Common myeloid progenitor, CD34-positive (primary cell): ENCODE measurements at regions of chr11 and their contacts with region 1.

Region 1: GRCh38 chr11:12235947-12236743 is 125.8 kb downstream of the MICAL2 start:
- DNase-seq: peak; percentile 60 to 92 (median 91)
- H3K4me3 ChIP-seq: peak overlapping the region in 1 of 7 experiments; percentile 26
- H3K27ac ChIP-seq: peak overlapping the region; percentile 40 to 51
- H3K4me1 ChIP-seq: peaks cover 6 to 47% (median 43%) of the 10 kb centered on the region in 4 experiments
- H3K27me3 ChIP-seq: no peaks in the 10 kb centered on the region

Region 2: DNA sequence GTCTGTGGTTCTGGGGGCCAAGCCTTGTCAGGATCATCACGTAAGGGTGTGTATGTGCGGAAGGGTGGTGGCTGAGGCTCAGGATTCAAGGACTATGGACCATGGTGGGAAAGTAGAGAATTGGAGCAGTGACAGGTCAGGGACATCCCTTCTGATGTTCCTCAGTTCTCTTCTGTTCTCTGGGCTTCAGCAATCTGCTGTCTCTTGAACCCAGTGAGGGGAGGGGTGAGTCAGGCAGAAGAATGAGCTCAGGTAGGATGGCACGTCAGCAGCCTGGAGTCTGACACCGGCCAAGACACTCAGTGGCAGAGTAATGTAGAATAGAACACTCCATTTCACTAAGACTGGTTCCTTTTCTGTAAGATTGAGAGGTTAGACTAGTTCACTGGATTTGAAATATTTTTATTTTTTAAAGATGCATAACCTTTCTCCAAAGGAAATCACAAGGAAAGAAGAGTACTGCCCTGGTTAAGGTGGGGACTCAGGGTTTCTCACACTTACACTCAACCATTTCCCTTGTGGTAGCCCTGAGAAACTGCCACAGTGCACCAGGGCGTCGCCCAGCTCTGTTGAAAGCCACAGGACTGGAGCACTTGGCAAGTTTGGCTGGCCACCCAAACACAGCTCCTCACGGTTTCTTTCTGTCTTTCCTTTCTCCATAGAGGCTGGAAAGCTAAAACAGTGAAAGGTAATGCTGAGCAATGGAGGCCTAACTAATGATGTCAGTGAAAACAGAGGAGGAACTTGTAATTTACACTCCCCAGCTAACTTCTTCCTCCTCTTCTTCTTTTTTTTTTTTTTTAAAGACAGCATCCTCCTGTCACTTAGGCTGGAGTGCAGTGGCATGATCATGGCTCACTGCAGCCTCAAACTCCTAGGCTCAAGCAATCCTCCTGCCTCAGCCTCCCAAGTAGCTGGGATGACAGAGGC is 148.8 kb before region 1 on chr11:
- CTCF ChIA-PET with region 1: interaction called, 41 read pairs
- POLR2A ChIA-PET with region 1: interaction called, 3 read pairs
- DNase-seq: peak; percentile 47 to 75 (median 64)
- H3K4me3 ChIP-seq: peak overlapping the region in 1 of 7 experiments; percentile 36
- H3K27ac ChIP-seq: no peak overlapping the region
- H3K4me1 ChIP-seq: peaks cover 10 to 72% (median 45%) of the 10 kb centered on the region in 4 experiments
- H3K27me3 ChIP-seq: no peaks in the 10 kb centered on the region

Region 3: DNA sequence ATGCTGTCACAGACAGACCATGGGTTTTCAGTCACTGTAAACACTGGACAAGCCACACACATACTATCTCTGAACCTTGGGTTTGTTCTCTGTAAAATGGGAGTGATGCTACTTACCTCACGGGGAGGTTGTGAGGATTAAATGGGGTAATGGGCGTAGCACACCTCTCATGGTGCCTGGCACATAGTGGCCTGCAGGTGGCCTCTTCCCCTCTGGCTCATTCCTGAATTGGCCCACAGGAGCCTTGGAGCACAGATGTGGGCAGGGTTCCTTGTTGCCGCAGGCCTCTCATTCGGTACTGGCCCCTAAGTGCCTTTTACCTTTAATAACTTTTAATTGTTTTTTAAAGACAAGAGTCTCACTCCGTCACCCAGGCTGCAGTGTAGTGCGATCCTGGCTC is 114.1 kb before region 1 on chr11:
- CTCF ChIA-PET with region 1: interaction called, 64 read pairs
- POLR2A ChIA-PET with region 1: no interaction called
- DNase-seq: no peak
- H3K4me3 ChIP-seq: no peak overlapping the region
- H3K27ac ChIP-seq: no peak overlapping the region
- H3K4me1 ChIP-seq: peaks cover 13 to 63% (median 23%) of the 10 kb centered on the region in 4 experiments
- H3K27me3 ChIP-seq: no peaks in the 10 kb centered on the region

Region 4: GRCh38 chr11:12164061-12165014 is 71.8 kb before region 1 on chr11:
- CTCF ChIA-PET with region 1: interaction called, 10 read pairs
- POLR2A ChIA-PET with region 1: no interaction called
- DNase-seq: no peak
- H3K4me3 ChIP-seq: no peak overlapping the region
- H3K27ac ChIP-seq: no peak overlapping the region
- H3K4me1 ChIP-seq: peaks cover 0 to 28% (median 6%) of the 10 kb centered on the region in 4 experiments
- H3K27me3 ChIP-seq: no peaks in the 10 kb centered on the region

Region 5: DNA sequence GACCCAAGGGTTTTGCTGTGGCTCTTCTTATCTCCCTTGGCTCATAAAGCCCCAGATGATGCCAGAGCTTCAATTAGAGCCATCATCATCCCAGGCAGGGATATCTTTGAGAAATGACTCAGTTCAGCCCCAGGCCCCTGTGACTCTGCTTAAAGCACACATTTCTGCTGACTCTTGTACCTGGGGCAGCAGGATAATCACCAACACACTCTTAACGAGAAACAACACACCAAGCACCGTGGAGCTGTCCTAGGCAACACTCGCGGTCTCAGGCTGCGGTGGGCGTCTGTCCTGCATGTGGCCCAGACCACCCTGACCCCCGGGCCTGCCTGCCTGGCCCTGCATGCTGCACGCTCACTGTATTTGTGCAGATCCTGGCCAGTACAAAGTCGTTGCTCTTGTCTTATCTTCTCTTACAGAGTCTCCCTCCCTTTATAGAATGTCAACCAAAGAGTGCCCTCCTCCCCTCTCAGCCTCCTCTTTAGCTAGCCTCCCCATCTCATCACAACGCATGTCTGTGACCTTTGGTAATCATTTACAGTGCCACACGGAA is 27.1 kb after region 1 on chr11:
- CTCF ChIA-PET with region 1: interaction called, 14 read pairs
- POLR2A ChIA-PET with region 1: no interaction called
- DNase-seq: no peak
- H3K4me3 ChIP-seq: no peak overlapping the region
- H3K27ac ChIP-seq: no peak overlapping the region
- H3K4me1 ChIP-seq: no peaks in the 10 kb centered on the region
- H3K27me3 ChIP-seq: peaks cover 0 to 2% (median 0%) of the 10 kb centered on the region in 5 experiments